AG04450 (cell line): ENCODE measurements at regions of chr6 and their contacts with region 1.

Region 1: DNA sequence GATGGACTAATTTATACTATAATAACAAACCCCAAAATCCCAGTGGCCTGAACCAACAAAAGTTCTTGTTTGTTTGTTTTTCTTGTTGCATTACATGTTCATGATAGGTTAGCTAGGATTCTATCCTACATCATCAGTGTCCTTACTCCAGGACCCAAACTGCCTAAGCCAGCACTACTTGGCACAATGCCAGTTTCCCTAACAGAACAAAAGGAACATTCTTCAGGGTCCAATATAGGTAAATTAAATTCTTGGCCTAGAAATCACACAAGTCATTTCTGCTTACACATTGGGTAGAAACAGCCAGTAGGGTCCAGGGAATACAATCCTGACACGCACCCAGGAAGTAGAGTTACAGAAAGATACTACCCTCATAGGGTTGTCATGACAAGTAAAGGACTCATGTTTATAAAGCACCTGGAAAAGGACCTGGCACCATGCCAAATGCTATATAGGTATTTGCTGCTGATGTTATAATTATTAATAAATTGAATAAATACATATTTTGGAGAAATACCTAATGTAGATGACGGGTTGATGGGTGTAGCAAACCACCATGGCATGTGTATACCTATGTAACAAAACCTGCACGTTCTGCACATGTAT is 38.8 kb downstream of the RCAN2 start:
- DNase-seq: no peak
- H3K4me3 ChIP-seq: no peak overlapping the region
- H3K27ac ChIP-seq: no peak overlapping the region
- H3K27me3 ChIP-seq: no peaks in the 10 kb centered on the region
- CTCF ChIP-seq: no peak

Region 2: GRCh38 chr6:46959419-46959818 is 507.0 kb after region 1 on chr6:
- CTCF ChIA-PET with region 1: no interaction called
- POLR2A ChIA-PET with region 1: interaction called, 13 read pairs
- DNase-seq: no peak
- H3K4me3 ChIP-seq: no peak overlapping the region
- H3K27ac ChIP-seq: no peak overlapping the region
- H3K27me3 ChIP-seq: peaks cover 2% of the 10 kb centered on the region
- CTCF ChIP-seq: no peak